Astrocyte of the cerebellum (primary cell): ENCODE measurements at regions of chr7 and their contacts with region 1.

Region 1: GRCh38 chr7:83301416-83301815 is 138.7 kb upstream of the PCLO start:
- DNase-seq: no peak
- H3K4me3 ChIP-seq: no peak overlapping the region
- CTCF ChIP-seq: no peak

Region 2: DNA sequence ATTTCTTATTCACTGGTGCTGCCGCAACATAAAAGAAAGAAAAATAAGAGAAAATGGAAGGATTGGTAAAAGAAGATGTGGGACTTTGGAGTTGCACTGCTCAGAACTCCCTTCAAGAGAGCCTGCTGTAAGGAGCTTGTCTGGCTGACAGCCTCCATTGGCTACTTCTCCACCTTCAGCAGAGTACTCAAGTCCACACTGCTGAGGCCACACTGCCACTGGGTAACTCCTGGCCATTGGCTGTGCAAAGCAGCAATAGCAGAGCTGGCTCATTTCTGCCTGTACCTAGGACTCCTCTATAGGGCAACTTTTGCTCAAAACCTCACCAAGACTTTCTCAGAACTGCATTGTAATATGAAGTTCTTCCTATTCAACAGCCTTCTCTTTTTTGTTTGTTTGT is 100.1 kb before region 1 on chr7:
- in situ Hi-C with region 1: loop called (anchors 5 kb)
- DNase-seq: no peak
- H3K4me3 ChIP-seq: no peak overlapping the region
- CTCF ChIP-seq: no peak